PC-3 (cell line): ENCODE measurements at regions of chr1 and their contacts with region 1.

Region 1: GRCh38 chr1:225533238-225533637 is 105.4 kb upstream of the LBR start:
- DNase-seq: peak; percentile 26
- ATAC-seq: peak; percentile 90
- H3K4me3 ChIP-seq: no peak overlapping the region
- H3K27ac ChIP-seq: no peak overlapping the region
- H3K4me1 ChIP-seq: peaks cover 18% of the 10 kb centered on the region
- H3K27me3 ChIP-seq: no peaks in the 10 kb centered on the region
- CTCF ChIP-seq: no peak

Region 2: GRCh38 chr1:225480825-225481434 is 52.3 kb before region 1 on chr1:
- CTCF ChIA-PET with region 1: interaction called, 11 read pairs
- POLR2A ChIA-PET with region 1: no interaction called
- intact Hi-C with region 1: no loop called
- DNase-seq: peak; percentile 85
- ATAC-seq: peak; percentile 84
- H3K4me3 ChIP-seq: no peak overlapping the region
- H3K27ac ChIP-seq: no peak overlapping the region
- H3K4me1 ChIP-seq: no peaks in the 10 kb centered on the region
- H3K27me3 ChIP-seq: no peaks in the 10 kb centered on the region
- CTCF ChIP-seq: peak; percentile 99

Region 3: DNA sequence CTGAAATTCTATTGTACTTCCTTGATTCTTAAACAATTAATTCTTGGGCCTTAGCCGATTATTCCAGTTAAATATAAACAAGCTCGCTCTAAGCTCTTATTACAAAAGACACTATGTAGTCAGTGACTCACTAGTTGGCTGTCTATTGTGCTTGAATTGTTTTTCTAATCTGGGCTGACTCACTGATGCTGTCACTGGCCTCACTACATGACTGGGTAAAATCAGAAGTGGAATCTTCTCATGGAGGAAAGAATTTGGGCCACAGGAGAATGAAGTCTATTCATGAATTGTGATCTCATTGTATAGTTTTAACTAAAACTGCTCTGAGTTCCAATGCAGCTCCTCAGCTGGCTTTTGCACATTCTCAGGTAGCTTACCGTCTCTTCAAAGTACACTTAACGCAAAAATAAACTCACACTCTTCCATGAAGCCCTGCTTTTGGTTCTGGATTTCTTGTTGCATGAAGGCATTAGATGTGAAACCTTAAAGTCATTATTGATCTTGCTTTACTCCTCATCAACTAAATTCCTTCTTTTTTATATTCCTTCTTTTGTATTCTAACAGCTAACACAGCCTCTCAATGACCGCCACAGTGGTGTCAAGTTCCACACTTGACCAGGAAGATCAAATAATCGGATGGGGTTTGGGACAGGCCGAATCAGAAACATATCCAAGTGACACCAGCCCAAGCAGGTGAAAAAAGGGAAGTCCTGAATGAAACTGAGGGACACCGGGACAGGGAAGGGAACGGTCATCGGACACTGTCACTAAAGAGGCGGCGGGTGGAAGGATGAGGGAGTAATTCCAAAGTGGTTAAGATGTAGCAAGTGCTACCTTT is 24.5 kb before region 1 on chr1:
- CTCF ChIA-PET with region 1: no interaction called
- POLR2A ChIA-PET with region 1: no interaction called
- intact Hi-C with region 1: loop called (anchors 2 kb)
- DNase-seq: peak; percentile 98
- ATAC-seq: peak; percentile 95
- H3K4me3 ChIP-seq: no peak overlapping the region
- H3K27ac ChIP-seq: peak overlapping the region; percentile 89
- H3K4me1 ChIP-seq: peaks cover 26% of the 10 kb centered on the region
- H3K27me3 ChIP-seq: no peaks in the 10 kb centered on the region
- CTCF ChIP-seq: no peak